Dorsolateral prefrontal cortex (tissue), 120 donors: ENCODE measurements at regions of chr17 and their contacts with region 1.

Region 1: DNA sequence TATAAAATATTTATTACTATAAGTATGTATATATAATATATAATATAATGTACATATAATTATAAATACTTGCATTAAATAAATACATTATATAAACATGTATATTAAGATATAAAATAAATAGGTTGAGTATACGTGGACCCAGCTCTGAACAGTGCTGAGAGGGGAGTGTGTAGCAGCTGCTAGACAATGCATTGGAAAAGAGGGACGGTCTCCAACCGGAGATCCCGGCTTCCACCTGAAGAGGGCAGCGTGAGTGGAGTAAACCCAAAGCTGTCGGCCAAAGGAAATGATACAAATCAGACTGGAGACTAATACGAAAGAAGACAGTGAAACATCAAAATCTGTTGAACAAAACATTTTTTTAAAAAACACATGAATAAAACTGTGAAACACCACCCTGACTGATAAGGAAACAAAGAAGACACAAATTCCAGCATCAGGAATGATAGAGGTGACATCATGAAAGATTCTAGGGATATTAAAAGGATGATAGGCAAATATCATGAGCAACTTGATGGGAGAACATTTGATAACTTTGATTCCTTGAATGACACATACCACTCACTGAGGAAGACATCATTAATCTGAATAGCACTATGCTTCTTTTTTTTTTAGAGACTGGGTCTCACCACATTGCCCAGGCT is 125.4 kb upstream of the CHMP6 start:
- DNase-seq: peak; percentile 66 to 80 (median 76)
- H3K4me3 ChIP-seq: no peak overlapping the region
- H3K27ac ChIP-seq: no peak overlapping the region
- H3K27me3 ChIP-seq: no peaks in the 10 kb centered on the region
- CTCF ChIP-seq: peak; percentile 48 to 86 (median 76)

Region 2: DNA sequence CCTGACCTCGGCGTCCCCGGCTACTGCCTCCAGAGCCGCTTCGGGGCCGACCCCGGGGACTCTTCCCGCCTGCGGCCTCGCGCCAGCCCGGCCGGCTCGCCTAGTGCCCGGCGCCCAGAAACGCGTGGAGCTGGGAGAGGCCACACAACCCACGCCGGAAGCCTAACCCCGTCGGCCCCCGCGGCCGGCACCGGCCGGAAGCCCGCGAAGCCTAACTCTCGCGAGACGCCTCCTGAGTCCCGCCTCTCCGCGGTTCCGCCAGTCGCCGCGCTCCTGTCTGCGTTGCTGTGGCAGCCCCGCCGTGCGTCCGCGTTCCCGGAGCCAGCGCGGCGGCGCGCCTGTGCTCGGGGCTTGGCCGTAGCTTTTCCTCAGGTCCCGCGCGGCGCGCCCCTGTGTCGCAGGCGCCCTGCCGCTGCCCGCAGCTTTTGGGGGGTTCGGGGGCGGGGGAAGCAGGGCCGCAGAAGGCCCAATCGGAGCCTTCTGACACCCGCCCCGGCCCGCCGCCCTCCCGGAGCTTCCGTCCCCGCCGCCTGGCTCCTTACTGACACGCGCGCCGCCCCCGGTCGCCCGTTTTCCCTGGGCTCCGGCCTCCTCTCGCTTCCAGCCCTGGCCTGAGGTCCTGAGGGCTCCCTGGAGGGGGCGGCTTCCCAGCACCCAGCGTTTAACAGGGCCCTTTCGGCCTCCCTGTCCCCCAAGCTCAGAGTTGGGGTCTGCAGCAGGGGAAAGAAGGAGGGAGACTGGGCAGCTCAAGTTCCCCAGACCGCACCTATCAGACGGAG is 411.5 kb before region 1 on chr17:
- intact Hi-C with region 1: loop called in 1 of 2 experiments (anchors 10 kb)
- DNase-seq: peak; percentile 91 to 99 (median 96)
- H3K4me3 ChIP-seq: peak overlapping the region; percentile 57 to 98 (median 86)
- H3K27ac ChIP-seq: peak overlapping the region; percentile 68 to 99 (median 97)
- H3K27me3 ChIP-seq: no peaks in the 10 kb centered on the region
- CTCF ChIP-seq: peak in 41 of 56 donors; percentile 2 to 63 (median 35)

Region 3: DNA sequence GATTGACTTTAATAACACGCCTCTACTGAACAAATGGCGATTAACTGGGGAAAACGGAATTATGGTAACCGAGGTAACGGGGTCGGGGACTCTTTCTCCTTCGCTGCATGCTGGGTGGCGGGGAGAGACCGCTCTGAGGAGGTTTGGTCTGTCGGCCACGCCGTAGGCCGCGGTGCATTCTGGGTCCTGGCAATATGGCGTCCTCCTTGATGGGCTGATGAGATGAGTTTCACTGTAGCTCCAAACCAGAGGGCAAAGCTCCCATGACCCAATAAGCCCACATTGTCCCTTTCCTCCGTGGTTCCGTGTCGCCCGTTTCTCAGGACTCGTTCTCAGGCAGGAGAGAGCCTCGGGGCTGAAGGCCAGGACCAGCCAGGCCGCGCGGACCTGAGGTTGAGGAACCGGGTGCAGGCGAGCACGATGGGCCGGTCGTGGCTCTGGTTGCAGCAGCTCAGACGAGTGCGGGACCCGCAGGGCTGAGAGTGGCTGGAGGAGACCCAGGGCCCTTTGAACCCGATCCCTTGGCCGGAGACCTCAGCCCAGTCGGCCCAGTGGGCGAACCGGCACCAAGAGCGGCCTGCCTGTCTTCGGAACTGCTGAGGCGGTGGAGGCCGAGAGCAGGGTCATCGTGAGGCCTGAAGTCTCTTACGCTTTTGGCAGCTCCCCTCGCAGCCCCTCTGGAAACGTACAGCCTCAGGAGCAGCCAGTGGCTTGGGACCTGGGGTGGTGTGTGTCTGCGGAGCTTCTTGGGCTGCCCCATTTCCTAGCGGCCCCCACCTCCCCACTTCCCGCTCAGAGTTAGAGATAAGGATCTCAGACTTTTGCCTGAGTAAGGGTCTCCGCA is 321.4 kb before region 1 on chr17 and contains the start of gene RPTOR:
- intact Hi-C with region 1: loop called in 1 of 2 experiments (anchors 10 kb)
- DNase-seq: peak; percentile 84 to 97 (median 94)
- H3K4me3 ChIP-seq: peak within 1 kb of the TSS; percentile 66 to 100 (median 94)
- H3K27ac ChIP-seq: peak within 1 kb of the TSS; percentile 13 to 95 (median 82)
- H3K27me3 ChIP-seq: no peaks in the 10 kb centered on the region
- CTCF ChIP-seq: peak in 47 of 56 donors; percentile 15 to 64 (median 37)
- total RNA-seq, gene RPTOR: 44.7 to 76.5 (median 57.2) TPM

Region 4: DNA sequence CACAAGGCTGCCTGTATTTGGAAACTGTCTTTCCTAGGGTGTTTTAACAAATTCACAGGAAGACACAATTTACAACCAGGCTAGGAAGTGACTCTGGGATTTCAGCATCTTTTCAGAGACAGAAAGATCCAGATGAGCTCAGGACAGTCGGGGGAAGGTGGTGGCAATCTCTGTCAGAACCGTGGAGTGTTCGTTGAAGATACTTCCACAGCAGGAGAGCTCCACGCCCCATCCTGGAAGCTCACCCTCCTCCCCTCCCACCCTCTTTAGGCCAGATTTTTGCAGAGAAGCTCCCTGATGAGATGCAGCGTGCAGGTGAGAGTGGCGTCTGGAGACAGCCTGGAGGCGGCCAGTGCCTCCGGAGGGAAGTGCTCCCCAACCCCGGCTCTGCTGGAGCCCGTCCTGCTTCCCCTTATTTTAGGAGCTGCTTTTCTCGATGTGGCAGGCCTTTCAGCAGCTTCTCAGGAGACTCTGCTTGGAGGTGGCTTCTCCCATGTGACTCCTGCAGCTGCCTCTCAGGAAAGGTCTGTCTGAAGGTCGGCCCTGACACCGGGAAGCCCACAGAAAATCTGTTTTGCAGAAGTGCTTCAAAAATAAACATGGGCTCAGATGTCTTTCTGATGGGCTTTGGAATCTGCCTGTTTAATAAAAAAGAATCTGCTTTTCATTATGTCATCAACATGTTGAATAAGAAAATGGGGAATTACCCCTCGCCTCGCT is 61.1 kb before region 1 on chr17:
- intact Hi-C with region 1: no loop called
- DNase-seq: peak in 7 of 10 donors; percentile 23 to 65 (median 45)
- H3K4me3 ChIP-seq: no peak overlapping the region
- H3K27ac ChIP-seq: peak overlapping the region in 44 of 59 donors; percentile 11 to 78 (median 50)
- H3K27me3 ChIP-seq: no peaks in the 10 kb centered on the region
- CTCF ChIP-seq: no peak

Region 5: DNA sequence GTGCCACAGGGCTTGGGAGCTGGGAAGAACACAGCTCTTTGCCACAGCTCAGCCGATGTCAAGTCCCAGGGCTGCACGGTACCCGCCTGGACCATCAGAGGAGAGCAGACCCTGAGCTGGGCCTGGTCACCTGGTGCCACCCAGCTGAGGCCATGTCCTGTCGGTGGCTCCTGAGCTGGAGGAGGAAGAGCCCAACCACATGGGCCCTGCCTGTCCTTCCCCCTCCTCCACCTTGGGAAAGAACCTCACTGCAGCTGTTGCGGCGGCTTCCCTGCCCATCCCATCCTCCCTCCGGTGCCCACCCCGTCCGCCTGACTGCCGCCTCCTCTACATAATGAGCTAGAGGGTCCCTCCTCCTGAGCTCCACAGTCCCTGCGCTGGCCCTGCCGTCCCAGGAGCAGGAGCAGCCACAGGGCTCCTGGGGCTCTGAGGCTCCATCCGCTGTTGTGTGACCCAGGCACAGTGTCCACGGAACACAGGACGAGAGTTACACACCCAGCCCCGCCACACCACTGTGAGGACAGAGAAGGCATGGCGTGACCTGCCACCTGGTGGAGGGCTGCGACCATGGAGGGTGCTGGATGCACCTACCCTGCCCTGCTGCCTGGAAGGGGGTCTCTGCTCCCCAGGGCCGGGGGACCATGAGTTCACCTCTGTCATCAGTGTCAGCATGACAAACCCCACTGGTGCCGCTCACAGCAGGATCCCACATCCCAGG is 103.9 kb after region 1 on chr17:
- intact Hi-C with region 1: loop called (anchors 5 to 10 kb)
- DNase-seq: peak; percentile 46 to 74 (median 64)
- H3K4me3 ChIP-seq: peak overlapping the region in 3 of 59 donors; percentile 5 to 21 (median 6)
- H3K27ac ChIP-seq: peak overlapping the region in 14 of 59 donors; percentile 21 to 92 (median 82)
- H3K27me3 ChIP-seq: no peaks in the 10 kb centered on the region
- CTCF ChIP-seq: peak in 55 of 56 donors; percentile 27 to 73 (median 55)

Region 6: GRCh38 chr17:80981062-80981902 is 115.0 kb after region 1 on chr17:
- intact Hi-C with region 1: loop called (anchors 5 to 10 kb)
- DNase-seq: peak in 1 of 10 donors; percentile 53
- H3K4me3 ChIP-seq: peak overlapping the region in 53 of 59 donors; percentile 22 to 65 (median 43)
- H3K27ac ChIP-seq: no peak overlapping the region
- H3K27me3 ChIP-seq: peaks cover 0 to 4% (median 0%) of the 10 kb centered on the region in 45 donors
- CTCF ChIP-seq: peak; percentile 36 to 96 (median 84)